Head of caudate nucleus (tissue), 42 donors: ENCODE measurements at regions of chr2 and their contacts with region 1.

Region 1: GRCh38 chr2:105114551-105114950 is 76.7 kb downstream of the MRPS9 start:
- DNase-seq: peak in 7 of 42 donors; percentile 17 to 53 (median 34)

Region 2: GRCh38 chr2:104871972-104872865 is 242.3 kb before region 1 on chr2:
- intact Hi-C with region 1: no loop called
- DNase-seq: peak in 40 of 42 donors; percentile 41 to 86 (median 69)

Region 3: DNA sequence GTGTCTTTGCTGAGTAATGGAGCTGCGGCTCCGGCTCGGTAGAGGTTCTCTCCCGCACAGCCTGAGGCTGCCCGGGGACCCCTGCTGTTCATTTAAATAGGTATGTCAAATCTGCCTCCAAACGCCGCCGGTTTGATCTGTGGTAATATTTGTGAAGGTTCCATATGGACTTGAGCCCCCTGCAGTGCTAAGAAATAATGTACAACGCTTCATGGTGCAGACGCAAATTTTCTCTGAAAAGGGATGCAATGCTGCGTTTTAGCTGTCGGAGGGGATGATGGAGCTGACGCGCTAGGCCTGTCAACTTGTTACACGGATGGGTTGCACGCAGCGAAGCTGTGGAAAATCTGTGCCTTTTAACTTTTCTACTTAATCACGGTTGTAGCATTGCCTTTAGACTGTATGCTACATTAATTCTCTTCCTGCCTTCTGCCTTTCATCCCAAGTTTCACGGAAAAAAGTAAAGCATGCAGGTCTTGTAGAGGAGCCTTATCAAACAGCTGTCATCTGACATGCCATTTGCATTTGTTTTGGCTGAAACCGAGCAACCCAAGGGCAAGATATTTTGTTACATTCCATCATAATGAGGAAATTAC is 33.4 kb before region 1 on chr2:
- intact Hi-C with region 1: no loop called
- DNase-seq: peak in 27 of 42 donors; percentile 10 to 60 (median 33)

Region 4: GRCh38 chr2:105166688-105167087 is 52.1 kb after region 1 on chr2:
- intact Hi-C with region 1: no loop called
- DNase-seq: no peak

Region 5: GRCh38 chr2:105179469-105180372 is 65.2 kb after region 1 on chr2:
- intact Hi-C with region 1: loop called (anchors 10 kb)
- DNase-seq: peak in 39 of 42 donors; percentile 18 to 85 (median 50)

Region 6: GRCh38 chr2:105235388-105236054 is 121.0 kb after region 1 on chr2:
- intact Hi-C with region 1: loop called (anchors 5 kb)
- DNase-seq: peak; percentile 63 to 91 (median 84)